ENCODE measurements at regions of chr11 and their contacts with region 1.

Region 1: DNA sequence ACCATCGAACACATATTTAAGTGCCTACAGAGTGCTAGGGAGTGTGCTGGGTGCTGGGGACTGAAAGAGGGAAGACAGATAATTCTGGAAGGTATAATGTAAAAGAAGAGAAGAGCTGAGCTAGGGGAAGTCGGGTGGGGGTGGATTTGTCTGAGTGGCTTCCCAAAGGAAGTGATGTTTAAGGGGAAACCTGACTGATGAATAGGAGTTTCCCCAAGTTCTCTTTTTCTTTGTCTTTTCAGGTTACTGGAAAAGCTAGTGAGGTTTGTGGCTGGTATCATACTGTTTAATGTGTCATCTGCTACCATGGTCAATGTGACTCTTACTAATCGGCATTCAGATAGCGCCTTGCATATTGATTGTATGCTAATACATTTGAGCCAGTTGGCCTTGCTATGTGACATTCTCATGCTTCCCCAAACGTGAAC is 151.6 kb upstream of the MTMR2 start:
- DNase-seq: peak; percentile 42
- H3K4me3 ChIP-seq: no peak overlapping the region
- H3K27ac ChIP-seq: no peak overlapping the region
- H3K4me1 ChIP-seq: peaks cover 32% of the 10 kb centered on the region
- H3K27me3 ChIP-seq: no peaks in the 10 kb centered on the region
- CTCF ChIP-seq: no peak

Region 2: GRCh38 chr11:95652002-95652472 is 423.5 kb before region 1 on chr11:
- CTCF ChIA-PET with region 1: no interaction called
- POLR2A ChIA-PET with region 1: no interaction called
- intact Hi-C with region 1: no loop called
- DNase-seq: no peak
- H3K4me3 ChIP-seq: no peak overlapping the region
- H3K27ac ChIP-seq: no peak overlapping the region
- H3K4me1 ChIP-seq: no peaks in the 10 kb centered on the region
- H3K27me3 ChIP-seq: no peaks in the 10 kb centered on the region
- CTCF ChIP-seq: no peak

Region 3: GRCh38 chr11:96037405-96037936 is 38.1 kb before region 1 on chr11:
- CTCF ChIA-PET with region 1: no interaction called
- POLR2A ChIA-PET with region 1: no interaction called
- intact Hi-C with region 1: no loop called
- DNase-seq: peak; percentile 9
- H3K4me3 ChIP-seq: no peak overlapping the region
- H3K27ac ChIP-seq: no peak overlapping the region
- H3K4me1 ChIP-seq: no peaks in the 10 kb centered on the region
- H3K27me3 ChIP-seq: no peaks in the 10 kb centered on the region
- CTCF ChIP-seq: no peak

Region 4: GRCh38 chr11:96143016-96143670 is 67.6 kb after region 1 on chr11:
- CTCF ChIA-PET with region 1: no interaction called
- POLR2A ChIA-PET with region 1: no interaction called
- intact Hi-C with region 1: loop called (anchors 5 kb)
- DNase-seq: peak; percentile 92
- H3K4me3 ChIP-seq: peak overlapping the region; percentile 20
- H3K27ac ChIP-seq: peak overlapping the region; percentile 53
- H3K4me1 ChIP-seq: peaks cover 64% of the 10 kb centered on the region
- H3K27me3 ChIP-seq: no peaks in the 10 kb centered on the region
- CTCF ChIP-seq: no peak